Caki2 (cell line): ENCODE measurements at regions of chr2 and their contacts with region 1.

Region 1: GRCh38 chr2:86079981-86080911 is 25.4 kb downstream of the POLR1A start:
- DNase-seq: peak; percentile 50

Region 2: GRCh38 chr2:86035883-86036668 is 44.2 kb before region 1 on chr2:
- in situ Hi-C with region 1: loop called (anchors 5 kb)
- DNase-seq: peak; percentile 59

Region 3: DNA sequence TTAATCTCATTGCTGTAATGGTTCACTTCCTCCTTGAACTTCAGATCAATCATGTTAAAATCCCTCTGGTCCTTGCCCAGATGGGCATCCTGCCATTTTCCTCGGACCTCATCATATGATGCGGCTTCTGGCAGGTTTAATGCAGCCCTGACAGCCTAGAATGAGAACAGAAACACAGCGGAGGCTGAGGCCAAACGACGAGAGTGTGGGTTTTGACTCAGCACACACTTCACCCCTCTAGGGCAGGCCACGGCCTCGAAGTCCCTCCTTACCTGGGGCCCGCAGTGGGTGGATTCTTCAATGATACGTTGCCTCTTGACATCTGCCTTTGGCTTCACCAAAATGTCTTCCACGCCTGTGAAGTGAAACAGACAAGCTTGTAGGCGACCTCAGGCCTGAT is 31.4 kb before region 1 on chr2:
- in situ Hi-C with region 1: no loop called
- DNase-seq: no peak